ENCODE measurements at regions of chr13 and their contacts with region 1.

Region 1: GRCh38 chr13:51583875-51584730 is at the start of gene WDFY2:
- DNase-seq: peak; percentile 100
- ATAC-seq: peak; percentile 80
- H3K4me3 Mint-ChIP-seq: peak within 1 kb of the TSS; percentile 94
- H3K27ac Mint-ChIP-seq: peak within 1 kb of the TSS; percentile 97
- H3K4me1 Mint-ChIP-seq: peaks cover 31% of the 10 kb centered on the region
- H3K27me3 Mint-ChIP-seq: no peaks in the 10 kb centered on the region
- CTCF ChIP-seq: no peak
- total RNA-seq, gene WDFY2: 16.8 and 20.8 TPM in 2 replicates

Region 2: GRCh38 chr13:51608857-51609406 is 24.8 kb after region 1 on chr13:
- CTCF ChIA-PET with region 1: interaction called, 5 read pairs
- POLR2A ChIA-PET with region 1: interaction called, 33 read pairs
- intact Hi-C with region 1: loop called (anchors 1 kb)
- DNase-seq: no peak
- ATAC-seq: peak; percentile 79
- H3K4me3 Mint-ChIP-seq: peak overlapping the region; percentile 71
- H3K27ac Mint-ChIP-seq: peak overlapping the region; percentile 84
- H3K4me1 Mint-ChIP-seq: peaks cover 66% of the 10 kb centered on the region
- H3K27me3 Mint-ChIP-seq: no peaks in the 10 kb centered on the region
- CTCF ChIP-seq: no peak

Region 3: DNA sequence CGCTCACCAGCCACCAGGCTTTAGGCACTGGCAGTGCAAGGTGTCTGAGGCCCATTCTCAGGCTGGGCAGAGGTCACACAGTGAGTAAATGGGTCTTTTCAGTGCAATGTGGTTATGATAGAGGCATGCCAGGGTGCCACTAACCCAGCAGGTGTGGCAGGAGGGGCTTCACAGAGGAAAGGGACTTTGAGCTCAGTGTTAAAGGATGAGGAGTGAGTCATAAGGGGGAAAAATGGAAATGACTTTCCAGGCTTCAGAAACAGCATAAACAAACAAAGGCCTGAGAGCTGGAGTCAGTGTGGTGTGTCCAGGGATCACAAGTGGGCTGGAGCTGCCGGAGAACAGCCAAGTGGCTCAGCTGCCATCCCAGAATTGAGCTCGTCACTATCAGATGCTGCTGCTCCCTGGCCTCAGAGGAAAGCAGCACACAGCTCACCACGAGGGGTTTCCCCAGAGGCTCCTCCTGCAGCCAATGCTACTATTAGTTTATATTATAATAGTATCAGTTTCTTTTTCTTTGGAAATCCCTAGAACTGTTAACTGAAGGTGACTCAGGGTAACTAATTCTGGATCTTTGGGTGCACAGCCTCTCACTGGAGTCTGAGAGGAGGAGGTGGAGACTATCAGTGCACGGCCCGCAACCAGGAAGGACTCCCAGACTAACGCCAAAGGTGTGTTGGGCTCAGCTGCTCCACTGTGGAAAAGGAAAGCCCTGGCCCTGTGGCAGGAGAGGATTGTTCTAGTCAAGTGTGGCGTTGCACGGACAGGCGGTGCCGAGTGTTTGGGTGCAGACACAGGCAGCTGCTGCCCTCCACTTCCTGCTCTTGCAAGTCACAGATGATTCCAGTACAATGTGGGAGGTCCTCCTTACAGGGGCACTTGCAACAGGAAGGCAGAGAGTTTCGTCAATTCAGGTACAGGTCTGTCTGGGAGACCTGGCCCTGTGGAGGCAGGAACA is 180.4 kb after region 1 on chr13:
- CTCF ChIA-PET with region 1: interaction called, 3 read pairs
- POLR2A ChIA-PET with region 1: interaction called, 5 read pairs
- intact Hi-C with region 1: loop called (anchors 1 kb)
- DNase-seq: peak; percentile 36
- ATAC-seq: peak; percentile 91
- H3K4me3 Mint-ChIP-seq: peak overlapping the region; percentile 74
- H3K27ac Mint-ChIP-seq: peak overlapping the region; percentile 90
- H3K4me1 Mint-ChIP-seq: peaks cover 29% of the 10 kb centered on the region
- H3K27me3 Mint-ChIP-seq: no peaks in the 10 kb centered on the region
- CTCF ChIP-seq: no peak

Region 4: DNA sequence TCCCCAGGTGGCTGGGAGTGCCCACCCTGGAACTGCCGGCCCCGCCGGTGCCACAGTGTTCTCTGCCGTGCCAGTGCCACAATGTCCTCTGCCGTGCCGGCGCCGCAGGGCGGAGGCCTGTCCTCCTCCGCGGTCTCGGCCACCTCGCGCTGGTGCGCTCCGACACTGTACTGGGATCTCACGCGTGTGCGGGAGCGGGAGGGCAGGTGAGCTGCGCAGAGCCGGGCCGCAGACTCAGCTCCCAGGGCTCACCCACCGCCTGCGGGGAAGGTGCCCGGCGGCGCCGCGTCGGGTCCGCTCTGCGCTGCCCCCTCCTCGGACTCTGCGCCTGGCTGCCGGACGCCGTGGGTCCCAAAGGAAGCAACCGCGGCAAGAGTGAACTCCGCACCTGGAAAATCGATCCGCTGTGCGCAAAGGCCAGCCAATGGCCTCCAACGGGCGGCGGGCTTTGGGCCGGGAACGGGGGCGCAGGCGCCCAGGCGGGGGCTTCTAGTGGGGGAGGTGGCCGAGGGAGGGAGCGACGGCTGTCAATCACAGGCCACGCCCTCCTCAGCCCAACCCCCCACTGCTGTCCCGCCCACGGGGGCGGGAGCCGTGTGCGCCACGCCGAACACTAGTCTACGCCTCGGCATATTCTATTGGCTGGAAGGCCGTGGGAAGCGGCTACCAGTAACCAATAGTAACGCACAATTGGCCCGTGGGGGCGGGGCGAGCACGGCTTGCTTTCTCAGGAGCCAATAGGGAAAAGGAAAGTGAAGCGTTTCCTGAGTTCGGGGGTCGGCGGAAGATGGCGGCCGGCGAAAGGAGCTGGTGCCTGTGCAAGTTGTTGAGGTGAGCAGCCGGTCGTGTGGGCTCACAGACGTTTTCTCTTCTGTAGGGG is 427.8 kb after region 1 on chr13 and contains the start of gene ALG11:
- CTCF ChIA-PET with region 1: no interaction called
- POLR2A ChIA-PET with region 1: no interaction called
- intact Hi-C with region 1: loop called (anchors 1 kb)
- DNase-seq: peak; percentile 98
- ATAC-seq: peak; percentile 99
- H3K4me3 Mint-ChIP-seq: peak within 1 kb of the TSS; percentile 99
- H3K27ac Mint-ChIP-seq: peak within 1 kb of the TSS; percentile 89
- H3K4me1 Mint-ChIP-seq: peaks cover 19% of the 10 kb centered on the region
- H3K27me3 Mint-ChIP-seq: peaks cover 16% of the 10 kb centered on the region
- CTCF ChIP-seq: no peak
- total RNA-seq, gene ALG11: 31.8 and 36.9 TPM in 2 replicates

Region 5: GRCh38 chr13:52194184-52194868 is 610.2 kb after region 1 on chr13:
- CTCF ChIA-PET with region 1: no interaction called
- POLR2A ChIA-PET with region 1: no interaction called
- intact Hi-C with region 1: loop called (anchors 1 kb)
- DNase-seq: peak; percentile 90
- ATAC-seq: peak; percentile 86
- H3K4me3 Mint-ChIP-seq: peak overlapping the region; percentile 99
- H3K27ac Mint-ChIP-seq: peak overlapping the region; percentile 98
- H3K4me1 Mint-ChIP-seq: peaks cover 31% of the 10 kb centered on the region
- H3K27me3 Mint-ChIP-seq: no peaks in the 10 kb centered on the region
- CTCF ChIP-seq: no peak

Measured in activated B cell treated with CpG ODN at 0.5 μM for 24 hours (primary cell).